Calu3 (cell line): ENCODE measurements at regions of chrX and their contacts with region 1.

Region 1: DNA sequence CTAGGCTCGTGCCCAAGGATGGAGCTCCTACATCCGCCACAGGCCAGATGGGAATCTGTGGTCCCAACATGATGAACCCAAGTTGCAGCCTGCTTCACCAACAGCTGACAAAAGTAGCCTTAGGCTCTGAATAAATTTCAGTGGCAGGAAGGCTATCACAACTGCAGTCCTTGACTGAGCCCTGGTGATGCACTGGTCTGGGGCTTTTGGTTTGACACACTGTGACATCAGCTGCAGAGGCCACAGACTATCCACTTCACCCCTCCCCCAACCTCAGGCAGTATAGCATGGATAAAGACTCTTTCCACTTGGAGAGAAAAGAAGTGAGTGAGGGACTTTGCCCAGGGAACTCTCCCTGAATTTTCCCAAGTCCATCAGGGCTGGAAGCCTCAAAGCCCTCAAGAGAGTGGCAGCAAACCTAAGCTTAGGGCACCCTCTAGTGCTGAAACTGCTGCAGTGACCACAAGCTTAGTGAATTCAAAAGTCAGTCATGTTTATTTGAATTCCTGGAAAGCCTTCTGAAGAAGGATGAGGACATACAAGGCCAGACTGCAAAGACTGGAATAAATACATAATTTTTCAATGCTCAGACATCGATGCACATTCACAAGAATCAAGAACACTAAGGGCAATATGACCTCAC is 135.0 kb upstream of the TENT5D start:
- DNase-seq: peak; percentile 55
- H3K4me3 Mint-ChIP-seq: no peak overlapping the region
- H3K27ac Mint-ChIP-seq: no peak overlapping the region
- H3K4me1 Mint-ChIP-seq: no peaks in the 10 kb centered on the region
- H3K27me3 Mint-ChIP-seq: no peaks in the 10 kb centered on the region
- CTCF ChIP-seq: no peak

Region 2: DNA sequence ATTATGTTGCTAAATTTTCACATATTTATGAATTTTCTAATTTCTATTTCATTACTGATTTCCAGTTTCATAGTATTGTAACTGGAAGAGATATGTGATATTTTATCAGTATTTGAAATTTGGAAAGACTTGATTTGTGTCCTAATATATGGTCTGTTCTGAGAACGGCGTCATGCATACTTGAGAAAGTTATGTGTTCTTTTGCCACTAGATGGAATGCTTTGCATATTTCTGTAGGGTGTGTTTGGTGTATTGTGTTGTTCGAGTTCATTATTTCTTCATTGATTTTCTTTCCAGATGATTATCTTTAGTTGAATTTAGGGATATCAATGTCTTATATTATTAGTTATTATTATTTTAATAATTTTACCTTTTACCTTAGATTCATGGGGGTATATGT is 807.6 kb before region 1 on chrX:
- CTCF ChIA-PET with region 1: no interaction called
- intact Hi-C with region 1: loop called (anchors 5 kb)
- DNase-seq: no peak
- H3K4me3 Mint-ChIP-seq: no peak overlapping the region
- H3K27ac Mint-ChIP-seq: no peak overlapping the region
- H3K4me1 Mint-ChIP-seq: no peaks in the 10 kb centered on the region
- H3K27me3 Mint-ChIP-seq: no peaks in the 10 kb centered on the region
- CTCF ChIP-seq: no peak

Region 3: DNA sequence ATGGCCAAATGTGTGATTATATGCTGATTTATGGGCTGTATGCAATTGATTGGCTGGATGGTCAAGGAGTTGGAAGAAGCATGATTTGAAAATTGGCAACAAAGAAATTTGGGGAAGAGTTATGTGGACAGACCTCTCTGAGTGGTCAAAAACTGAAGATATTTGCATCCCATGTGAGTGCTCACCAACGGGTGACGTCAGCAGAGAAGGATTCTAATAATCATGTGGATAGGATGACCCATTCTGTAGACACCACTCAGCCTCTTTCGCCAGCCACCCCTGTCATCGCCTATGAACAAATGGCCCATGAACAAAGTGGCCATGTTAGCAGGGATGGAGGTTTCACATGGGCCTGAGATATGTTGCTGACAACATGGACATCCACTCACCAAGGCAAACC is 238.4 kb after region 1 on chrX:
- CTCF ChIA-PET with region 1: no interaction called
- intact Hi-C with region 1: no loop called
- DNase-seq: no peak
- H3K4me3 Mint-ChIP-seq: no peak overlapping the region
- H3K27ac Mint-ChIP-seq: no peak overlapping the region
- H3K4me1 Mint-ChIP-seq: no peaks in the 10 kb centered on the region
- H3K27me3 Mint-ChIP-seq: no peaks in the 10 kb centered on the region
- CTCF ChIP-seq: no peak

Region 4: DNA sequence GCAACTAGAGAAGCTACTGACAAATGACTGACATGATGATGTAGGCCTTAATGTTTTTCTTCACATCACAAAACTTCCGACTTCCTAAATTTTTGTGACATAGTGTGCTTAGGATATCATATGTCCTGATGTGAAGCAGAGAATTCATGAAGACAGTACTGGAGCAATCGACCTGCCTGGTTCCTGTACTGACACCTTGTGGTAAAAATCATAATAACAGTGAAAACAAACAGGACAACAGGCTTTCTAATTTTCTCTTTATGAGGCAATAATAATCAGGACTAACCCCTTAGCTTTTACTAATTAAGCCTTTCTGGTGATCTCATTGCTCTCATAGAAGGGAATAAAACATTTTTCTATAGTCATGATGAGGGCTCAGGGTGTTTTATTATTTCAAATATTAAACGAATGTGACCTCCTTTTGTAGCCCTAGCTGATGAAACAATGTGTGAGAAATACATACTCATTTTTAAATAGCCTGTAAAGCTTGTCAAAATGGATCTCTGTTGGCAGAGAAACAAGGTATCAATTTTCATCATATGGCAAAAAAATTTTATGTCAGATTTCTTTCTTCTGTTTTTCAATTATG is 293.4 kb after region 1 on chrX:
- CTCF ChIA-PET with region 1: interaction called, 5 read pairs
- intact Hi-C with region 1: loop called (anchors 1 kb)
- DNase-seq: no peak
- H3K4me3 Mint-ChIP-seq: no peak overlapping the region
- H3K27ac Mint-ChIP-seq: no peak overlapping the region
- H3K4me1 Mint-ChIP-seq: no peaks in the 10 kb centered on the region
- H3K27me3 Mint-ChIP-seq: no peaks in the 10 kb centered on the region
- CTCF ChIP-seq: peak; percentile 27

Region 5: DNA sequence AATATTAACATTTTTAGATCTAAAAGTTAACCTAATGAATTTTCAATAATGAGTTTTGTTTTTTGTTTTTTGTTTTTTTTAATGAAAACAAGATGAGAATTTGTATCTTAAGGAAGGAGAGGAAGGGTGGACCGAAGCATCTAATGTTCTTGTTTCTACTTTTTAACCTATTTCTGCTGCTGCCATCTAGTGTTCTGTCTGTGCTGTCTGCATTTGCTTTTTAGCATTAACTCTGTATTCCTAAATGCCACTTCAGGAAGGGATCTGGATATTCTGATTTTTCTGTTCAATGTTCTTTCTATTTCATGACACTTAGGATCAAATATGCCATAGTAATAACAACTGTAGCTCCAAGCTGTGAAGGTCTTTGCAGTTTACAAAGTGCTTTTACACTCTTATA is 362.8 kb after region 1 on chrX:
- CTCF ChIA-PET with region 1: no interaction called
- intact Hi-C with region 1: loop called (anchors 2 kb)
- DNase-seq: no peak
- H3K4me3 Mint-ChIP-seq: no peak overlapping the region
- H3K27ac Mint-ChIP-seq: no peak overlapping the region
- H3K4me1 Mint-ChIP-seq: no peaks in the 10 kb centered on the region
- H3K27me3 Mint-ChIP-seq: no peaks in the 10 kb centered on the region
- CTCF ChIP-seq: peak; percentile 38